CD4-positive, alpha-beta T cell (primary cell): ENCODE measurements at regions of chr11 and their contacts with region 1.

Region 1: DNA sequence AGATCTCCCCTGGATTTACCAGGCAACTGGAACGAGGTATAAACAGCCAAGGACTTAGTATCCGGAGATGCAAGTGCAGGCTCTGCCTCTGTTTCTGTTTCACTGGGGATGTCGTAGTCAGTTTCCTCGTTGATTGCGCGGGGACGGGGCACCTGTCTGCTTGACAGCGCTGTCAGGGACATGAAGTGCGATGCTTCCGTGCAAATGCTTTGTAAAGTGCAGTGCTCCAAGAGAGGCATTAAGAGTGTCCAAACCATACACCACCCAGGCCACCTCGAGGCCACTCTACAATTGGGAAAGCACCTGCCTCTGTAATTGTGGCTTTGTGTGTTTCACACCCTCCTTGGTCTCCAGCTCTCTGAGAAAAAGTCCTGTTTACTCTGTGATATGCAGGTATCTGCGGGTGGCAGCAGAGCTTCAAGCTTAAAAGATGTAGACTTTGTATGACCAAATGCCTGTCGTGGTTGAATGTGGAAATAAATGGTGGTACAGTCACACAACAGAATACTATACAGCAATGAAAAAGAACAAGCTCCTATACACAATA is 18.6 kb upstream of the CD5 start:
- DNase-seq: peak; percentile 56 to 92 (median 68)
- ATAC-seq: peak; percentile 67
- H3K4me3 ChIP-seq: peak overlapping the region; percentile 53
- H3K4me3 Mint-ChIP-seq: peak overlapping the region; percentile 89
- H3K27ac ChIP-seq: peak overlapping the region; percentile 90 to 94
- H3K27ac Mint-ChIP-seq: peak overlapping the region; percentile 98
- H3K4me1 ChIP-seq: peaks cover 54% of the 10 kb centered on the region
- H3K4me1 Mint-ChIP-seq: peaks cover 66% of the 10 kb centered on the region
- H3K27me3 ChIP-seq: no peaks in the 10 kb centered on the region
- H3K27me3 Mint-ChIP-seq: no peaks in the 10 kb centered on the region
- CTCF ChIP-seq: peak; percentile 36

Region 2: GRCh38 chr11:60970369-60970774 is 113.3 kb before region 1 on chr11:
- CTCF ChIA-PET with region 1: interaction called, 10 read pairs
- POLR2A ChIA-PET with region 1: interaction called, 5 read pairs
- intact Hi-C with region 1: no loop called
- DNase-seq: peak; percentile 71 to 90 (median 80)
- ATAC-seq: peak; percentile 71
- H3K4me3 ChIP-seq: peak overlapping the region; percentile 96
- H3K4me3 Mint-ChIP-seq: peak overlapping the region; percentile 90
- H3K27ac ChIP-seq: peak overlapping the region; percentile 83 to 93
- H3K27ac Mint-ChIP-seq: peak overlapping the region; percentile 94
- H3K4me1 ChIP-seq: peaks cover 29% of the 10 kb centered on the region
- H3K4me1 Mint-ChIP-seq: peaks cover 25% of the 10 kb centered on the region
- H3K27me3 ChIP-seq: no peaks in the 10 kb centered on the region
- H3K27me3 Mint-ChIP-seq: no peaks in the 10 kb centered on the region
- CTCF ChIP-seq: peak; percentile 97

Region 3: DNA sequence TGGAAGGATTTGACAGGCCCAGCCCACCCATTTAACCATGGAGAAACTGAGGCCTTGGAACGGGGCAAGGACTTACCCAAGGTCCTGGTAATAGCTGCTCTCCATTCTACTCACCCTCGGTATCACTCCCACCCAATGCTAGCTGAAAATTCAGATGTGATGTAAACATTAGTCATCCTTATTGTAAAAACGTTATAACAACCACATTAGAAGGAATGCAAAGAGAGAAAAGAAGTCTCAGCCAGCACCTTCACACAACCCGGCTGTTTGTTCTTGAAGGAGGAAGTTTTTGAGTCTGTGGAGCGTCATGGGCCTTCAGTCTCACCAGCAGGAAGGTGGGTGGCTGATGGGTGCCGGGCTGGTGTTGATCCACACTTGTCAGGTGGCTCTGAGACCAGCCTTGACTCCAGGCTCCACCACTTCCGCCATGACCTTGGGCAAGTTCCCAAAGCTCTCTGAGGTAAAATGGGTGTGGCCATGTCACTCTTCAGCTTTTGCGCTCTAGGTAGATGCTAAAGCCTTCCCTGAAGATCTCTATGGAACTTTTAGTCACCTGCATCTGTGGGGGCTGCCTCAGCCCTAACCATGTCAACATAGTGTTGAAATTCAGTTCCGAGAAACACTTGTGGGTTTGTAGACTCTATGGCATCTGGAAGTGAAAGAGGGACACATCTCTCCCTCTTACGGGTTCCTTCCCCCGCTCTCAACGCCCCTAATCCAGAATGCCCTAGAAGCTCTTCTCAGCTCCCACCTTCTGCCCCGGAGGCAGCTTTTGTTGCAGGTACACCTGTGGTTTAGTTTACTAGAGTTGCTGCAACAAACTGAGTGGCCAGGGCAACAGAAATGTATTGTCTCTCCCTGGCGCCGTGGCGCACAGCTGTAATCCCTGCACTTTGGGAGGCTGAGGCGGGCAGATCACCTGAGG is 97.4 kb before region 1 on chr11:
- CTCF ChIA-PET with region 1: interaction called, 10 read pairs
- POLR2A ChIA-PET with region 1: interaction called, 28 read pairs
- intact Hi-C with region 1: no loop called
- DNase-seq: peak; percentile 81 to 99 (median 90)
- ATAC-seq: peak; percentile 81
- H3K4me3 ChIP-seq: peak overlapping the region; percentile 41
- H3K4me3 Mint-ChIP-seq: peak overlapping the region; percentile 72
- H3K27ac ChIP-seq: peak overlapping the region; percentile 86 to 95
- H3K27ac Mint-ChIP-seq: peak overlapping the region; percentile 94
- H3K4me1 ChIP-seq: peaks cover 91% of the 10 kb centered on the region
- H3K4me1 Mint-ChIP-seq: peaks cover 98% of the 10 kb centered on the region
- H3K27me3 ChIP-seq: no peaks in the 10 kb centered on the region
- H3K27me3 Mint-ChIP-seq: no peaks in the 10 kb centered on the region
- CTCF ChIP-seq: no peak

Region 4: DNA sequence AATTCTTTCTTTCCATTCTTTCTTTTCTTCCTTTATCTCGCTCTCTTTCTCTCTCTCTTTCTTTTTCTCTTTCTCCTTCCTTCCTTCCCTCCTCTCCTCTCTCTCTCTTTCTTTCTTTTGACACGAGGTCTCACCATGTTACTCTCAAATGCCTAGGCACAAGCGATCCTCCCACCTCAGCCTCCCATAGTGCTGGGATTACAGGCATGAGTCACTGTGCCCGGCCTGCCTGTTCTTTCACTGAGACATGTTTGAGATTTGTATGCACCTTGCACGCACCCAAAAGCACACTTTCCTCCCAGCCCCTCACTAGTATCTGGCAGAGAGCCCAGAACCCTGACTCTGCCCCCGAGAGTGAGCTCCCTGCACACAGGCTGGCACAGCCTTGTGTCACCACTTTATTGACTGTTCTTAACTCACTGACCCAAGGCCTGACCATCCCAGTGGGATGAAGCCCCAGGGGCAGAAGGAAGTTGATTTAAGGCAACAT is 55.4 kb before region 1 on chr11:
- CTCF ChIA-PET with region 1: interaction called, 4 read pairs
- POLR2A ChIA-PET with region 1: interaction called, 41 read pairs
- intact Hi-C with region 1: loop called (anchors 2 kb)
- DNase-seq: peak in 13 of 14 experiments; percentile 43 to 86 (median 69)
- ATAC-seq: peak; percentile 17
- H3K4me3 ChIP-seq: peak overlapping the region; percentile 15
- H3K4me3 Mint-ChIP-seq: peak overlapping the region; percentile 84
- H3K27ac ChIP-seq: peak overlapping the region; percentile 45 to 84
- H3K27ac Mint-ChIP-seq: peak overlapping the region; percentile 99
- H3K4me1 ChIP-seq: peaks cover 63% of the 10 kb centered on the region
- H3K4me1 Mint-ChIP-seq: peaks cover 84% of the 10 kb centered on the region
- H3K27me3 ChIP-seq: no peaks in the 10 kb centered on the region
- H3K27me3 Mint-ChIP-seq: no peaks in the 10 kb centered on the region
- CTCF ChIP-seq: no peak

Region 5: GRCh38 chr11:61071208-61071681 is 12.4 kb before region 1 on chr11:
- CTCF ChIA-PET with region 1: interaction called, 16 read pairs
- POLR2A ChIA-PET with region 1: interaction called, 58 read pairs
- intact Hi-C with region 1: loop called in 1 of 2 experiments (anchors 2 kb)
- DNase-seq: peak; percentile 37 to 88 (median 63)
- ATAC-seq: peak; percentile 95
- H3K4me3 ChIP-seq: no peak overlapping the region
- H3K4me3 Mint-ChIP-seq: peak overlapping the region; percentile 82
- H3K27ac ChIP-seq: peak overlapping the region; percentile 26 to 58
- H3K27ac Mint-ChIP-seq: peak overlapping the region; percentile 92
- H3K4me1 ChIP-seq: peaks cover 80% of the 10 kb centered on the region
- H3K4me1 Mint-ChIP-seq: peaks cover 95% of the 10 kb centered on the region
- H3K27me3 ChIP-seq: no peaks in the 10 kb centered on the region
- H3K27me3 Mint-ChIP-seq: no peaks in the 10 kb centered on the region
- CTCF ChIP-seq: no peak

Region 6: DNA sequence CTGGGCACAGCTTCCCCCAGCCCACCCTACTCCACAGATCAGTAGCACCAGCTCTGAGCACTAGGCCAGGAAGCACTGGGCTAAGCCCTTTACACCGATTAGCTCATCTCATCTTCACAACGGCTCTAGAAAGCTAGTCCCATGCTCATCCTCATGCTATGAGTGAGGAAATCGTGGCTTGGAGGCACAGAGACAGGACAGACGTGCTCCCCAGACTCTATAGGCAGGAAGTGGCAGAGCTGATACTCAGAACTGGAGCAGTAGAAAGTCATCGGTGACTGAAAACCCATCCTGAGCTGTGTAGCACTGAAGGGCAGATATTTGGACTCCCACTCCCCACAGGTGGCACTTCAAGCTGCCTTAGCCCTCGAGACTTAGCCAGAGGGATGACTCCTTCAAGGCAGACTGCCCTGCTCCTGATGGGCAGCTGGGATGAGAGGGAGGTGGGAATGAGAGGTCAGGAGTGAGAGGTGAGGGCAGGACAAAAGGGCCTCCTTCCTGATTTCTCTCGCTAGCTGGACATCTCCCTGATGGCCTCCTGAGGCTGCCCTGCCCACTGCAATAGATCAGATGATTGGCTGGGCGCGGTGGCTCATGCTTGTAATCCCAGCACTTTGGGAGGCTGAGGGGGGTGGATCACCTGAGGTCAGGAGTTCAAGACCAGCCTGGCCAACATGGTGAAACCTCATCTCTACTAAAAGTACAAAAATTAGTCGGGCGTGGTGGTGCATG is 28.3 kb after region 1 on chr11:
- CTCF ChIA-PET with region 1: interaction called, 19 read pairs
- POLR2A ChIA-PET with region 1: interaction called, 116 read pairs
- intact Hi-C with region 1: loop called in 1 of 2 experiments (anchors 2 kb)
- DNase-seq: peak in 13 of 14 experiments; percentile 28 to 87 (median 52)
- ATAC-seq: peak; percentile 78
- H3K4me3 ChIP-seq: peak overlapping the region; percentile 24
- H3K4me3 Mint-ChIP-seq: peak overlapping the region; percentile 83
- H3K27ac ChIP-seq: peak overlapping the region; percentile 67 to 71
- H3K27ac Mint-ChIP-seq: no peak overlapping the region
- H3K4me1 ChIP-seq: peaks cover 100% of the 10 kb centered on the region
- H3K4me1 Mint-ChIP-seq: peaks cover 100% of the 10 kb centered on the region
- H3K27me3 ChIP-seq: no peaks in the 10 kb centered on the region
- H3K27me3 Mint-ChIP-seq: no peaks in the 10 kb centered on the region
- CTCF ChIP-seq: no peak

Region 7: DNA sequence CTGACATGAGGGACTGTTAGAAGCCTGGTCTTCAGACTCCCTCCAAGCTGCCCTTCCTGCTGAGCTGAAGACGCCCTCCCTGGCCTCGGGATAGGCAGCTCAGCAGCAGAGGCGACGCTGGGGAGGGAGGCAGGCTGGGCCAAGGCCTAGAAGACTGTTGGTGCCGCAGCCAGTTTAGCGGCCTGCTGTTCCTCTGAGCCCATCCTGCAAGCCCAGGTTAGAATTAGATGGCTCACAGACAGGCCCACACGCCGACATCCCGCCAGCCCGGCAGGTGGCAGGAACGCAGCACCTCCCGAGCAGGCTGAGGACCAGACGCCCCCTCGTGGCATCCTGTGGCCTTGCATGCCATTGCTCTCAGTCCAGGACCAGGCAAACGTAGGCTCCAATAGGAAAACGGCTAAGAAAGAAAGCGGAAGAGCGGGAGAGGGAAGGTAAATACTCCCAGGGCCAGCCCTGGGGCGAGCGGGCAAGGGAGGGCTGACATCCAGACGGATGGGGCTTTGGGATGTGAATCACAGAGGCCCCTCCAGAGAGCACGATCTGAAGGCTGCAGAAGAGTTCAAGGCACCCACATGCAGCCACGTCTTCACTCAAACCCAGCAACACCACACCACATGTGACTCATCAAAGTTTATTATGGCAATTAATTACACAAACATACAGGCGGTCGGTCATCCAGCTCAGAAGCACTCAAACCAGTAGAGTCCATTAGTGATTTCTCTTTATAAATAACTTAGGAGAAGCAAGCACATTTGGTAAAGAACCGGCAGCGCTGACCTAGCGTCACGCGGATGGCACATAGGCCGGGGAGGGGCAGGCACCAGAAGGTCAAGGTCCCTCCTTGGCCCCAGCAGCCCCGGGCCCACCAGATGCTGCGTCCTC is 46.2 kb after region 1 on chr11:
- CTCF ChIA-PET with region 1: interaction called, 17 read pairs
- POLR2A ChIA-PET with region 1: interaction called, 13 read pairs
- intact Hi-C with region 1: loop called in 1 of 2 experiments (anchors 2 kb)
- DNase-seq: peak; percentile 86 to 94 (median 88)
- ATAC-seq: peak; percentile 84
- H3K4me3 ChIP-seq: no peak overlapping the region
- H3K4me3 Mint-ChIP-seq: peak overlapping the region; percentile 52
- H3K27ac ChIP-seq: peak overlapping the region; percentile 29 to 50
- H3K27ac Mint-ChIP-seq: peak overlapping the region; percentile 50
- H3K4me1 ChIP-seq: peaks cover 25% of the 10 kb centered on the region
- H3K4me1 Mint-ChIP-seq: peaks cover 39% of the 10 kb centered on the region
- H3K27me3 ChIP-seq: no peaks in the 10 kb centered on the region
- H3K27me3 Mint-ChIP-seq: no peaks in the 10 kb centered on the region
- CTCF ChIP-seq: peak; percentile 99